Breast epithelium (tissue), 4 donors: ENCODE measurements at regions of chr14 and their contacts with region 1.

Region 1: DNA sequence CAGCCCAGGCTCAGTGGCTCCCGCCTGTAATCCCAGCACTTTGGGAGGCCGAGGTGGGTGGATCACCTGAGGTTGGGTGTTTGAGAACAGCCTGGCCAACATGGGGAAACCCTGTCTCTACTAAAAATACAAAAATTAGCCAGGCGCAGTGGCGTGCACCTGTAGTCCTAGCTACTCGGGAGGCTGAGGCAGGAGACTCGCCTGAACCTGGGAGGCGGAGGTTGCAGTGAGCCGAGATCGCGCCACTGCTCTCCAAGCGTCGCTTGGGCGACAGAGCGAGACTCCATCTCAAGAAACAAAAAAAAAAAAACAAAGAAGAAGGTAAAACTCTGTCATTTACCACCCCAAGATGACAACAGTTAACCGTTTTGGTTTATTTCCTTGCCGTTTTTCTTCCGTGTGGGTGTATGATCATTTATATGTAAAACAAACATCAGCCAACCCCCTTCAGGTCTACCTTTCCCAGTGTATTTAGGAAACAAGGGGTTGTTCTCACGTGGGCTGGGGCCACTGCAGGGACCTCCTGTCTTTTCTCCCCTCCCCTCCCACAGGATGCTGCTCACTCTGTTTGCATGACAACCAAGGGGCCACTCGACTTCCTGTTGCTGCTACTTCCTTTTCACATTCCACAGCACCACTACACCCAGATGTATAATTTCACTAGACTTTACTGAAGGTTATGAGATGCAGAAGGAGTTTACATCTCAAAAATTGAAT is 13.6 kb downstream of the TTC9 start:
- DNase-seq: no peak
- H3K4me3 ChIP-seq: no peak overlapping the region
- H3K27ac ChIP-seq: no peak overlapping the region
- H3K4me1 ChIP-seq: no peaks in the 10 kb centered on the region
- H3K27me3 ChIP-seq: no peaks in the 10 kb centered on the region
- CTCF ChIP-seq: no peak
- POLR2A ChIP-seq: no peak

Region 2: DNA sequence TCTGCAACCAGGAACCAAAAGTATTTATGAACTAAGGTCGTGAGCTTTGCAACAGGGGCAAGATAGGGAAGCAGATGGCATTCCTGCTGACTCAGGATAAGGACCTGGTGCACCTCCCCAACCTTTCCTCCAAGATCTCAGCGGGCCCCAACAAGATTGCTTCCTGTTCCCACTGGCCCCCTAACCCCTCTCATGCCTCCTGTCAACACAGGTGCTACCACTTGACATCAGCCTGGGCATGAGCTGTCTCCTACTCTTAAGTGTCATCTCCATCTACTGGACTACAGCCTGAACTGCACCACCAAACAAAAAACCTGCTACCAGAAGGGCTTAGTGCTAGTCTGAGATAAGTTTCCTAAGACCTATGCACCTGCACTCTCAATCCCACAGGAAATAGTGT is 87.5 kb before region 1 on chr14:
- intact Hi-C with region 1: no loop called
- DNase-seq: no peak
- H3K4me3 ChIP-seq: no peak overlapping the region
- H3K27ac ChIP-seq: no peak overlapping the region
- H3K4me1 ChIP-seq: no peaks in the 10 kb centered on the region
- H3K27me3 ChIP-seq: no peaks in the 10 kb centered on the region
- CTCF ChIP-seq: no peak
- POLR2A ChIP-seq: no peak

Region 3: DNA sequence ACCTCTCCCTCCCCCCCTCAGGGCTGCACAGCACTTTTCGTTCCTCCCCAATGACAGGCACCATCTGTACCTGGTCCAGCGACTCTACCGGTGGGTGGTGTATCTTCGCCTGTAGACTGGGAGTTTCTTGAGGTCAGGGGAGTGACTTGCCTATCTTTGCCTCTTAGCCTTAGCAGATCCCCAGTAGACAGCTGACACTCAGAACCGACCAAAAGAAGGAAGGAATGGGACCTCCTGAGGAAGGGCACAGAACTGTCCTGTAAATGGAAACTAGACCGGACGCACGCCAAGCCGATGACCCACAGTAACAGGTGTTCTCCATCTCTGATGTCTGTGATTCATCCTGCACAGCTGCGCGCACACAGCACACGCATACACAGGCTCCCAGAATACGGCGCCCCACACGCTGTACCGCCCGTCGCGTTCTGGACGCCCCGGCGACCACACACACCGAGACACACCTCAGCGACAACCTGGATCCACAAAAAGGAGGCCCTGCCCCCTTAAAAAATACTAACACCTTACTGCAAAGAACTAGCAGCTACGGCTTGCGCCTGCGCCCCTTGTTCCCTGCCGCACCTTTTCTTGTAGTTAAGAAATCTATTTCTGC is 14.2 kb before region 1 on chr14:
- intact Hi-C with region 1: no loop called
- DNase-seq: no peak
- H3K4me3 ChIP-seq: peak overlapping the region; percentile 56 to 90 (median 70)
- H3K27ac ChIP-seq: peak overlapping the region; percentile 69 to 79
- H3K4me1 ChIP-seq: peaks cover 0 to 5% of the 10 kb centered on the region in 2 donors
- H3K27me3 ChIP-seq: no peaks in the 10 kb centered on the region
- CTCF ChIP-seq: no peak
- POLR2A ChIP-seq: no peak

Region 4: DNA sequence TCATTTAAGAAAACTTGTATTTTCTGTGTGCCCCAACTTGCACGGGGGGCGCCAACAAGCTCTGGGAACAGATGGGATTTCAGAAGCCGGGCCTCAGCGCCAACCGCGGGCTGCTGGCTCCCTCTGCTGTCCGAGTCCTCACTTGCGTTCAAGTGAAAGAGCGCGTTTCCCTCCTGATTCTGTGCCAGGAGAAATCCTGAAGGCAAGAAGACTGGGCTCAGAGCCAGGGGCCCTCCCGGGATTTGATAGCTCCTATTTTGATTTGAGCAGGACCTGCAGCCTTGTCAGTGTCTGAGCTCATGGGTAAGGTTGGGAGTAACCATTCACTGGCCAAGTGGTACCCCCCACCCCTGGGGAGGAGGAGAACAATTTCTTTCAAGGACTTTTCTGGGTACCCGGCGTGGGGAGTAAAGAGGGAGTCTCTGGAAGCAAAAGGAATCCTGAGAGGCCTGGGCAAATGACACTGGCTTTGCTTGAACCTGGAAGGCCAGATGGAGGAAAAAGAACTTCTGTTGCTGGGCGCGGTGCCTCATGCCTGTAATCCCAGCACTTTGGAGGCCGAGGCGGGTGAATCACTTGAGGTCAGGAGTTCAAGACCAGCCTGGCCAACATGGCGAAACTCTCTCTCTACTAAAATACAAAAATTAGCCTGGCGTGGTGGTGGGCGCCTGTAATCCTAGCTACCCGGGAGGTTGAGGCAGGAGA is 1098.0 kb after region 1 on chr14:
- intact Hi-C with region 1: no loop called
- DNase-seq: peak; percentile 75 to 79
- H3K4me3 ChIP-seq: peak overlapping the region in 2 of 3 donors; percentile 23 to 36
- H3K27ac ChIP-seq: no peak overlapping the region
- H3K4me1 ChIP-seq: peaks cover 0 to 7% of the 10 kb centered on the region in 2 donors
- H3K27me3 ChIP-seq: no peaks in the 10 kb centered on the region
- CTCF ChIP-seq: peak; percentile 54 to 92 (median 92)
- POLR2A ChIP-seq: no peak

Region 5: GRCh38 chr14:72643317-72643801 is 1988.1 kb after region 1 on chr14:
- intact Hi-C with region 1: loop called (anchors 10 kb)
- DNase-seq: peak in 1 of 2 donors; percentile 21
- H3K4me3 ChIP-seq: no peak overlapping the region
- H3K27ac ChIP-seq: no peak overlapping the region
- H3K4me1 ChIP-seq: no peaks in the 10 kb centered on the region
- H3K27me3 ChIP-seq: no peaks in the 10 kb centered on the region
- CTCF ChIP-seq: no peak
- POLR2A ChIP-seq: no peak